Mammary epithelial cell (primary cell): ENCODE measurements at regions of chr22 and their contacts with region 1.

Region 1: GRCh38 chr22:46367707-46368191 is 32.2 kb downstream of the TRMU start:
- DNase-seq: peak; percentile 66
- H3K4me3 ChIP-seq: no peak overlapping the region
- H3K27ac ChIP-seq: no peak overlapping the region
- H3K4me1 ChIP-seq: no peaks in the 10 kb centered on the region
- H3K27me3 ChIP-seq: no peaks in the 10 kb centered on the region
- CTCF ChIP-seq: peak; percentile 96 to 98

Region 2: GRCh38 chr22:46390652-46391301 is 23.0 kb after region 1 on chr22:
- CTCF ChIA-PET with region 1: interaction called, 3 read pairs
- dilution Hi-C with region 1: no loop called
- in situ Hi-C with region 1: no loop called
- intact Hi-C with region 1: loop called (anchors 2 kb)
- DNase-seq: peak; percentile 70
- H3K4me3 ChIP-seq: no peak overlapping the region
- H3K27ac ChIP-seq: no peak overlapping the region
- H3K4me1 ChIP-seq: no peaks in the 10 kb centered on the region
- H3K27me3 ChIP-seq: no peaks in the 10 kb centered on the region
- CTCF ChIP-seq: no peak